Calu3 (cell line): ENCODE measurements at regions of chr6 and their contacts with region 1.

Region 1: DNA sequence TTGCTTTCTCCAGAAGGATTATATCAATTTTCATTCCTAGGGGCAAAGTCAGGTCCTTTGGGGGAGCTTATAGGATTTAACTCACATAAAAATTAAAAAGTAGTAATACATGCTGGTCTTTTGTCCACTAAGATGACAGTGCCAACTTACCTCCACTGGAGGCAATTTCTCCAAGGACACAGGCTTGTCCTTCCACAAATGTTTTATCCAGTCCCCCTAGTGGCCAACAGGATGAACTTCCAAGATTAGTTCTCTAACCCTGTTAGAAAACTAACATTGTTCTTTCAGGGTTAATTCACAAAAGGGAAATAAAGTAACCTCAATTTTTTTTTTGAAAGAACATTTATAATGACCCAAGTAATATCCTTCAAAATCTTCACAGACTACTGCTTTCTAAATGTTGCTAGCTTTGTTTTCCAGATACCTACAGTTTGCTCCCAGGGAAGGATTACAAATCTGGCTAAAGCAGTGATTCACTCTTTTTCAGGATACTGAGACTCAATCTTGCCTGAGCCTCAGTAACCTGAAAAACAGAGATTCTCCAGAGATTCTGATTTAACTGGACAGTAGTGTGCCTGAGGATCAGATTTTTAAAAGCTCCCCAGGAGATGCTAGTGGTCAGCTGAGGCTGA is 31.7 kb upstream of the UBR2 start:
- DNase-seq: peak; percentile 46
- H3K4me3 Mint-ChIP-seq: no peak overlapping the region
- H3K27ac Mint-ChIP-seq: no peak overlapping the region
- H3K4me1 Mint-ChIP-seq: no peaks in the 10 kb centered on the region
- H3K27me3 Mint-ChIP-seq: no peaks in the 10 kb centered on the region
- CTCF ChIP-seq: peak; percentile 95

Region 2: DNA sequence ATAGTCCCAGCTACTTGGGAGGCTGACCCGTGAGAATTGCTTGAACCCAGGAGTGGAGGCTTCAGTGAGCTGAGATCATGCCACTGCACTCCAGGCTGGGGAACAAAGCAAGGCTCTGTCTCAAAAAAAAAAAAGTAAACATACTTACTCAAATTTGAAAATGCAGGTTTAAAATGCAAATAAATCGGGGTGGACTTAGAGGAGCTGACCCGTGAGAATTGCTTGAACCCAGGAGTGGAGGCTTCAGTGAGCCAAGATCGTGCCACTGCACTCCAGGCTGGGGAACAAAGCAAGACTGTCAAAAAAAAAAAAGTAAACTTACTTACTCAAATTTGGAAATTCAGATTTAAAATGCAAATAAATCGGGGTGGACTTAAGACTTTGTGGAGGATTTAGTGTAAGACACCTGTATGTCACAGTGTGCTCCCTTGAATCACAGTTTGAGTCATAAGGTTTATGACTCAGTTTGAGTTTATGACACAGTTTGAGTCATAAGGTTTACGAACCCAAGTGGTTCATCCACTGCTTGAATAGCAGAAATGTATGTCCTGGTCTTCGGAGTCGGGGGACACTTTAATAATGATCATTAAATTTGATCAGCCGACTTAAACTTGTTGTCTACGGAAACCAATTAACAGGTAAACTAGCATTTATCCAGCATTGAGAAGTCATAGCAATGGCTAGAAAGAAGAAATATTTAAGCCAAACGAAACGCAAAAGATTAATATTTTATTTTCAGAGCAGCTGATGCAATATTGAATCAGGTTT is 307.7 kb before region 1 on chr6:
- CTCF ChIA-PET with region 1: no interaction called
- intact Hi-C with region 1: loop called (anchors 10 kb)
- DNase-seq: peak; percentile 40
- H3K4me3 Mint-ChIP-seq: peak overlapping the region; percentile 56
- H3K27ac Mint-ChIP-seq: peak overlapping the region; percentile 100
- H3K4me1 Mint-ChIP-seq: peaks cover 79% of the 10 kb centered on the region
- H3K27me3 Mint-ChIP-seq: no peaks in the 10 kb centered on the region
- CTCF ChIP-seq: no peak

Region 3: DNA sequence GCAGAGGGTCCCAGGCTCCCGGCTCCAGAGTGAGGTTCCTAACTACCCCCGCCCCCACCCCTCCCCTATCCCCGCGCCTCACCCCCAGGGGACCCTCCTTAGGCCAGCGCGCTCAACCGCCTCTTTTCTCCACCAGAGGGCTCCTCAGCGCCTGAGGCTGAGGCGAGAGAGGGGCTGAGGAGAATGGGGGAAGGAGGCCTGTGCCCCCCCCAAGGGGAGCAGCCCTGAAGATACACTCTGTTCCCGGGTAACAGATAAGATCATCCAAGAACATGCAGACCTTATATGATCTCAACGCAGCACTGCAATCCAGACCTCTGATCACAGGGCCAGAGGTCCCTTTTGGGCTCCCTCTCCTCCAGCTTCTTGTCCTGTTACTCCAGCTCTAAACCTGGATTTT is 271.2 kb before region 1 on chr6:
- CTCF ChIA-PET with region 1: interaction called, 4 read pairs
- intact Hi-C with region 1: loop called (anchors 1 kb)
- DNase-seq: peak; percentile 60
- H3K4me3 Mint-ChIP-seq: no peak overlapping the region
- H3K27ac Mint-ChIP-seq: no peak overlapping the region
- H3K4me1 Mint-ChIP-seq: no peaks in the 10 kb centered on the region
- H3K27me3 Mint-ChIP-seq: no peaks in the 10 kb centered on the region
- CTCF ChIP-seq: peak; percentile 83

Region 4: DNA sequence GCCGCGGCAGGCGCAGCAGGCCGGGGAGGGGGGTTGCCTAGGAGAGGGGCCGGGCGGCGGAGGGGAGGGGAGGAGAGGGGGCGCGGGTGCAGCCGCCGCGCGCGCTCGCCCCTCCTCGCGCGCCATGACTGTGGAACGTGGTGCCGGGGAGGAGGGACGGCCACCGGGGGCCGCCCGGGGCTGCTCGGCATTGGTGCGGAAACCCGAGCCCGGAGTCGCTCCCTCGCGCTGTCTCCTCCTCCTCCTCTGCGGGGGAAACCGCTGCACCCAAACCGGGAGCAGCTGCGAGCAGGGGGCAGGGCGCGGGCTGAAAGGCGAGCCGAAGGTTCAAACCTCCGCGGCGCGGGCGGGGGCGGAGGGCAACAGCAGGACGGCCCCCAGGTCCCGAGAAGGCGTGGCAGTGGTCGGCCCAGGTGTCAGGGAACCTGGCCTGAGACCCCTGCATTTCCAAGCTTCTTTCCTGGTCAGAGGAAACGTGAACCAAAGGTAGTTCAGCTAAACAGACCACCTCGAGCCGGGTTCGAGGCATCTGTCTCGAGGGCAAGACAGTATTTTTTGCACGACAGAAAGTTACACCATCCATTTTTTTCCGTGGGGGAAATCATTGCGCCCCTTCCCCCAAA is 79.0 kb before region 1 on chr6:
- CTCF ChIA-PET with region 1: no interaction called
- intact Hi-C with region 1: loop called (anchors 5 kb)
- DNase-seq: peak; percentile 88
- H3K4me3 Mint-ChIP-seq: peak overlapping the region; percentile 98
- H3K27ac Mint-ChIP-seq: no peak overlapping the region
- H3K4me1 Mint-ChIP-seq: peaks cover 20% of the 10 kb centered on the region
- H3K27me3 Mint-ChIP-seq: peaks cover 32% of the 10 kb centered on the region
- CTCF ChIP-seq: no peak

Region 5: DNA sequence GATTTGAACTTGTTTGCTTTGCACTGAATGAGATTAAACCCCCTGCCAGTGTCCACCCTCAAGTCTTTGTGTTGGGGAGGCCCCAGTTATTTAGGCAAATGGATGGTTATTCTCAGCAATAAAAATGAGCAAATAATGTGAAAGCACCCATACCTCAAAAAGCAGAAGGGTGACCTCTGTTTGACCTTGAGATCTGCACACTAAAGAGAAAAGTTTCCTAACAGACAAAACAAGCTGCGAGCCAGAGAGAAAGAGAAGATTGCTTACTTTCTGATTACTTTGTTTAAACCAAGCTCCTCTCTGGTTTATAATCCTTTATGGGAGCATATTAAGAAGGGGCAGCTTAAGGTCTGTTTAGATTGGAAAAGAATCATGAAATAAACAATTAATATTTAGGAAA is 50.0 kb before region 1 on chr6:
- CTCF ChIA-PET with region 1: no interaction called
- intact Hi-C with region 1: no loop called
- DNase-seq: no peak
- H3K4me3 Mint-ChIP-seq: no peak overlapping the region
- H3K27ac Mint-ChIP-seq: no peak overlapping the region
- H3K4me1 Mint-ChIP-seq: no peaks in the 10 kb centered on the region
- H3K27me3 Mint-ChIP-seq: no peaks in the 10 kb centered on the region
- CTCF ChIP-seq: no peak

Region 6: GRCh38 chr6:42735976-42736375 is 203.8 kb after region 1 on chr6:
- CTCF ChIA-PET with region 1: no interaction called
- intact Hi-C with region 1: no loop called
- DNase-seq: no peak
- H3K4me3 Mint-ChIP-seq: no peak overlapping the region
- H3K27ac Mint-ChIP-seq: no peak overlapping the region
- H3K4me1 Mint-ChIP-seq: no peaks in the 10 kb centered on the region
- H3K27me3 Mint-ChIP-seq: peaks cover 14% of the 10 kb centered on the region
- CTCF ChIP-seq: no peak